Calu3 (cell line): ENCODE measurements at regions of chr3 and their contacts with region 1.

Region 1: DNA sequence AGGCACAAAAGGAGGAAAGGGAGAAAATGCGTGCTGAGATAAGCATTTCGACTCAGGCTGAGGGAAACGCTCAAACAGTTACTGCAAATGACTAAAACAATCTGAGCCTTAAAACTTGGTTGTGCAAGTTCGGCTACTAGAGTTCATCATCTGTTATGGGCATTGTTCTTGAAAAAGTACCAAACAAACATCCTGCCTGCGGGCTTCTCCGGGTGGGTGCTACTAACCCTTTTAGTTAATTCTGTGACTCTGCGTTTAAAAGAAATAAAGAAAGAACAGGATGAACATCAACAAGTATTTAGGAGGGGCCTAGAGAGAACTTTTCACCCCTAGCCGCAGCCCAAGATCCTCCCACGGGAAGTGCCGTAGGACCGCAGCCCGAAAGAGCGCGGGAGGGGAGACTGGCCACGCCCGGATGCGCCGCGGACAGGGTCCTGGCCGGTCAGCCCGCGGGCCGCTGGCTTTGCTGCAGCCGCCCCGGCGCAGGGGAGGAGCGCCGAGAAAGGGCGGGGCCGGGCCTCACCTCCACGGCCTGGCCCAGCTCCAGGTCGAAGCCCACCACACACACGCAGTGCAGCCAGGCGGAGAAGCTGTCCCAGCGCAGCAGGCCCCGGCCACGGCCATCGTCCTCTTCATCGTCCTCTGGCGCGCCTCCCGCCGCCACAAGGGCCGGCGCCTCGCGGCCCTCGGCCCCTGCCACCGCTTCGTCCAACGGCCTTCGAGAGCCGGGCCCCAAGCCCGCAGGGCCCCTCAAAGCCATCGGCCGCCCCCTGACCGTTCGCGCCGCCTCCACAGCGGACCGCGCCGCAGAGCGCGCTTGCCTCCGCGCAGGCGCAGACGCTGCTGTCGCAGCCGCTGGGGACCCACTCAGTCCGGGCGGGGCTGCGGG is at the start of gene DENND6A:
- DNase-seq: peak; percentile 97
- H3K4me3 Mint-ChIP-seq: peak within 1 kb of the TSS; percentile 69
- H3K27ac Mint-ChIP-seq: peak within 1 kb of the TSS; percentile 81
- H3K4me1 Mint-ChIP-seq: peaks cover 6% of the 10 kb centered on the region
- H3K27me3 Mint-ChIP-seq: no peaks in the 10 kb centered on the region
- CTCF ChIP-seq: no peak
- total RNA-seq, gene DENND6A: 23.7 and 25.1 TPM in 2 replicates

Region 2: GRCh38 chr3:57646723-57647122 is 45.8 kb before region 1 on chr3:
- CTCF ChIA-PET with region 1: no interaction called
- intact Hi-C with region 1: loop called (anchors 1 kb)
- DNase-seq: no peak
- H3K4me3 Mint-ChIP-seq: no peak overlapping the region
- H3K27ac Mint-ChIP-seq: no peak overlapping the region
- H3K4me1 Mint-ChIP-seq: peaks cover 10% of the 10 kb centered on the region
- H3K27me3 Mint-ChIP-seq: no peaks in the 10 kb centered on the region
- CTCF ChIP-seq: no peak

Region 3: DNA sequence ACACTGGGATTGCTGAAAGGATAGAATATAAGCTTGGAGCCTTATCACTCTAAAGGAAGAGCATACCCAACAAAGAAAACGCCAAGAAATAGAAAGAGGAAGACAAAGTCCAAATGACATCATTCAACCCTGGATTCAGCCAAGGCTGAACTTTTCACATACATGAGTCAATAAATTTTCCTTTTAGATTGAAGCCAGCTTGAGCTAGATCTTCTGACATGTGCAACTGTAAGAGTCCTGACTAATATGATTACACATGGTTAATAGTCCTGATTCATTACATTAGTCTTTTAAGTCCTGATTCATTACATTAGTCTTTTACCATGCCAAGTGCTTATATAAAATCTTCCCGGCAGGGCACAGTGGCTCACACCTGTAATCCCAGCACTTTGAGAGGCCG is 14.0 kb after region 1 on chr3:
- CTCF ChIA-PET with region 1: interaction called, 7 read pairs
- intact Hi-C with region 1: loop called (anchors 2 kb)
- DNase-seq: peak; percentile 21
- H3K4me3 Mint-ChIP-seq: no peak overlapping the region
- H3K27ac Mint-ChIP-seq: peak overlapping the region; percentile 28
- H3K4me1 Mint-ChIP-seq: peaks cover 26% of the 10 kb centered on the region
- H3K27me3 Mint-ChIP-seq: no peaks in the 10 kb centered on the region
- CTCF ChIP-seq: no peak

Region 4: GRCh38 chr3:57755668-57756527 is 63.4 kb after region 1 on chr3 and contains the start of gene SLMAP:
- CTCF ChIA-PET with region 1: interaction called, 4 read pairs
- intact Hi-C with region 1: loop called (anchors 1 kb)
- DNase-seq: peak; percentile 96
- H3K4me3 Mint-ChIP-seq: peak within 1 kb of the TSS; percentile 89
- H3K27ac Mint-ChIP-seq: peak within 1 kb of the TSS; percentile 82
- H3K4me1 Mint-ChIP-seq: peaks cover 18% of the 10 kb centered on the region
- H3K27me3 Mint-ChIP-seq: no peaks in the 10 kb centered on the region
- CTCF ChIP-seq: no peak
- total RNA-seq, gene SLMAP: 103 and 114 TPM in 2 replicates

Region 5: DNA sequence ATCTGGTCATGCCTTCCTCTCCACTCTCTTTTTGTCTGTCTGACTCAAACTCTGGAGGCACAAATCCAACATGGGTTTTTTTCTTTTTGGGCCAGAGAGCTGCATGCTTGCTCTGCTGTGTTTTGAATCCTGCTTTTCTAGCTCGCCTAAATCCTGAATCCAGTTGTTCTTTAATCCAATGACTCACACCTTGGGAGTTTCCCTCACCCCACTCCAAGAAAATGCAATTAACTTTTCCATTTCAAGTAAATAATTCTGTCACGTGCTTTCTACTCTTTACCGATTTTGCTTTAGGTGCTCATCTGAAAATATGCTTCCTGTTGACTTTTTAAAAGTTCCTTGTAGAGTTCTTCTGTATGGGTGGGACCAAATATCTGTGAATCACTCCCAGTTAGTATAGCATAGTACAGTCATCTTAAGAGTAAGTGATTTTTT is 111.2 kb after region 1 on chr3:
- CTCF ChIA-PET with region 1: interaction called, 3 read pairs
- intact Hi-C with region 1: loop called (anchors 5 kb)
- DNase-seq: peak; percentile 65
- H3K4me3 Mint-ChIP-seq: peak overlapping the region; percentile 57
- H3K27ac Mint-ChIP-seq: peak overlapping the region; percentile 95
- H3K4me1 Mint-ChIP-seq: peaks cover 76% of the 10 kb centered on the region
- H3K27me3 Mint-ChIP-seq: no peaks in the 10 kb centered on the region
- CTCF ChIP-seq: no peak

Region 6: DNA sequence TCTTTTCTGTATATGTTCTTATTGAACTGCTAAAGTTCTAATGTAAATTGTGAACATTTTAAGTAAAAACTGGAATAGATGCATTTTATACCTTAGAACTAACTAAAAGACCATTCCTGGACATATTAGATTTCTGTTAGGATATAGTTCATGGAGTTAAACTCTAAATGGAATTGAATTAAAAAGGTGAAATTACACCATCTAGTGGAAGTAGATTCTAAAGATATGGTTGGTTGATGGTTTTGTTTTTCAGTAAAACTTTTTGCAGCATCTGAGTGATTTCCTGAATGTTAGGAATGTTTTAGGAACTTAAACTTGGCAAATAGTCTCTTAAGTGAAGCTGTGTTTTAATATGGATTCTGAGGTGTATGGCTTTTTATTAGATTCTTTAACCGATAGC is 160.4 kb after region 1 on chr3:
- CTCF ChIA-PET with region 1: no interaction called
- intact Hi-C with region 1: loop called (anchors 5 kb)
- DNase-seq: no peak
- H3K4me3 Mint-ChIP-seq: no peak overlapping the region
- H3K27ac Mint-ChIP-seq: no peak overlapping the region
- H3K4me1 Mint-ChIP-seq: no peaks in the 10 kb centered on the region
- H3K27me3 Mint-ChIP-seq: no peaks in the 10 kb centered on the region
- CTCF ChIP-seq: no peak

Region 7: GRCh38 chr3:57896031-57896430 is 203.5 kb after region 1 on chr3:
- CTCF ChIA-PET with region 1: no interaction called
- intact Hi-C with region 1: no loop called
- DNase-seq: no peak
- H3K4me3 Mint-ChIP-seq: no peak overlapping the region
- H3K27ac Mint-ChIP-seq: no peak overlapping the region
- H3K4me1 Mint-ChIP-seq: no peaks in the 10 kb centered on the region
- H3K27me3 Mint-ChIP-seq: no peaks in the 10 kb centered on the region
- CTCF ChIP-seq: no peak